Vagina (tissue), 2 donors: ENCODE measurements at regions of chr16 and their contacts with region 1.

Region 1: DNA sequence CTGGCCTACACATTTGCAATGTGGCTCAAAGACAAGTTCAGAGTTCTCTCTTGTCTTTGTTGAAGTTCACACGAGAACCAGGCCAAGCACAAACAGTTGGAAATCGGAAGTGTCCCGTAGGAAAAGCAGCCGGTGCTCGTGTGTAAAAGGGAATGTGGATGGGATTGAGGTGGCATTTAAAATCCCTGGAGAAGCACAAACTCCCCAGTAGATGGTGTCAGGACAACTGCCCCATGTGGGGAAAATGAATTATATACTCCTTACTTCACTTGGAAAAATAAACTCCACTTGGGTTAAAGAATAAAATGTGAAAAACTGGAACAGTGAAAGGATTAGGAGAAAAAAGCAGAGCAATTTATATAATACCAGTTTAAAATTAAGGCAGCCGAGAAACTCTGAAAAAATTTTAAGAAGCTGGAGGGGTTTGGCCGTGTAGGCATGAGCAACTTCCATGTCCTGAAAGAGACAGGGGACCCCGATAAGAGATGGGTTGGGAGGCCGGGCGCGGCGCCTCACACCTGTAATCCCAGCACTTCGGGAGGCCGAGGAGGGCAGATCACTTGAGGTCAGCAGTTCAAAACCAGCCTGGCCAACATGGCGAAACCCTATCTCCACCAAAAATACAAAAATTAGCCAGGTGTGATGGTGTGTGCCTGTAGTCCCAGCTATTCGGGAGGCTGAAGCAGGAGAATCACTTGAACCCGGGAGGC is 28.1 kb downstream of the CBFA2T3 start:
- DNase-seq: no peak
- H3K4me3 ChIP-seq: no peak overlapping the region
- H3K27ac ChIP-seq: no peak overlapping the region
- H3K4me1 ChIP-seq: no peaks in the 10 kb centered on the region
- H3K27me3 ChIP-seq: no peaks in the 10 kb centered on the region
- CTCF ChIP-seq: no peak
- POLR2A ChIP-seq: no peak

Region 2: DNA sequence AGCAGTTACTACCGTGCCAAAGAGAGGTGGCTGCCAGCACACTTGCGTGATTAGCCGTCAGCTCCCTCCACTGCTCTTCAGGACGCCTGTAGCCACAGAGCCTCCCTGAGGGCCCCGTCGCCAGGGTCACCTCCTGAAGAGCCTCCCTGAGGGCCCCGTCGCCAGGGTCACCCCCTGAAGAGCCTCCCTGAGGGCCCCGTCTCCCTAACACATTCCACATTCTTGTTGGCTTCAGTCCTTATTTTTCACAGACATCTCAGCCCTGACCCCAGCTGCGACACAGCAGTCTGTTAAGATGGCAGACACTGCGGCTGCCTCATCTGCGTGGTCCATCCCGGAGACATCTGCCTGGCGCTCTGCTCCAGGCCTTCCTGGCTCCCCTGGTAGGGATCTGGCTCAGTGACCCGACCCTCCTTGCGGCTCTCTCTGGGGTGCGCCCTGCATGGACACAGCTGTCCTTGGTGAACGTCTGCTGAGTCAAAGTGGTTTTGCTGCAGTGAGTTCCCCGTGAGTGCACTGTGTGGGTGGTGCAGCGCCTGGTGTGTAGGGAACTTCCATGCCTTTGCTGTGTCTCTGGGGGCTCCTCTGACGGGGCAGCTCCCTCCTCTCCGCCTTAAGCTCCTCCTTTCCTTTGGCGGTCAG is 156.1 kb after region 1 on chr16:
- intact Hi-C with region 1: no loop called
- DNase-seq: no peak
- H3K4me3 ChIP-seq: no peak overlapping the region
- H3K27ac ChIP-seq: no peak overlapping the region
- H3K4me1 ChIP-seq: no peaks in the 10 kb centered on the region
- H3K27me3 ChIP-seq: no peaks in the 10 kb centered on the region
- CTCF ChIP-seq: no peak
- POLR2A ChIP-seq: no peak

Region 3: DNA sequence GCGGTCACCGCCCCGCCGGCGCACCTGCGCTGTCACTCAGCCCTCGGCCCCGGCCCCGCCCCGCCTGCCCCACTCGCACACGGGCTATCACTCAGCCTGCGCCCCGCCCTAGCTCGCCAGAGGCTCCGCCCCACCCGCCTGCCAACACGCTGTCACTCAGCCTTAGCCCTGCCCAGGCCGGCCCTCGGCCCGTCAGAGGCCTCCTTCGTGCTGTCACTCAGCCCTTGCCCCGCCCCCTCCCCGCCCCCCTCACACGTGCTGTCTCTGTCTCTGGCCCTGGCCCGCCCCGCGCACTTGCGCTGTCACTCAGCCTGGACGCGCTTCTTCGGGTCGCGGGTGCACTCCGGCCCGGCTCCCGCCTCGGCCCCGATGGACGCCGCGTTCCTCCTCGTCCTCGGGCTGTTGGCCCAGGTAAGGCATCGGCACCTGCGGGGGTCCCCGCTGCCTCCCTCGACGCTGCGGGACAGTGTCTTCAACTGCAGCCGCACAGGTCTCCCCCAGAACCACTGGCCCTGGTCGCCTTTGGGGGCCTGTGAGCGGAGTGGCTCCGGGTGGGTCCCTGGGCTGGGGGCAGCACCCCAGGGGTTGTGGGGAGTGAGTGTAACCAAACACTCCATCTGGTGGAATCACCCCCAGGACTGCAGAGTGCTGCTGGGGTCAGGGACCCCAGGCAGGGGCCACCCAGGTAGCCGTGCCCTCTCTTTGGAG is 222.7 kb after region 1 on chr16 and contains the start of gene CDH15:
- intact Hi-C with region 1: loop called (anchors 5 kb)
- DNase-seq: no peak
- H3K4me3 ChIP-seq: peak within 1 kb of the TSS; percentile 25
- H3K27ac ChIP-seq: no peak within 1 kb of the TSS
- H3K4me1 ChIP-seq: peaks cover 26% of the 10 kb centered on the region
- H3K27me3 ChIP-seq: no peaks in the 10 kb centered on the region
- CTCF ChIP-seq: no peak
- POLR2A ChIP-seq: no peak
- total RNA-seq, gene CDH15: not detected